CD4-positive, alpha-beta T cell (primary cell): ENCODE measurements at regions of chr19 and their contacts with region 1.

Region 1: GRCh38 chr19:58543826-58544590 is at the start of gene TRIM28:
- DNase-seq: peak; percentile 99 to 100 (median 100)
- ATAC-seq: peak; percentile 87
- H3K4me3 ChIP-seq: peak within 1 kb of the TSS; percentile 70
- H3K4me3 Mint-ChIP-seq: peak within 1 kb of the TSS; percentile 95
- H3K27ac ChIP-seq: peak within 1 kb of the TSS; percentile 79 to 88
- H3K27ac Mint-ChIP-seq: peak within 1 kb of the TSS; percentile 95
- H3K4me1 ChIP-seq: peaks cover 41% of the 10 kb centered on the region
- H3K4me1 Mint-ChIP-seq: peaks cover 40% of the 10 kb centered on the region
- H3K27me3 ChIP-seq: no peaks in the 10 kb centered on the region
- H3K27me3 Mint-ChIP-seq: no peaks in the 10 kb centered on the region
- CTCF ChIP-seq: no peak
- total RNA-seq, gene TRIM28: 549 to 553 TPM

Region 2: DNA sequence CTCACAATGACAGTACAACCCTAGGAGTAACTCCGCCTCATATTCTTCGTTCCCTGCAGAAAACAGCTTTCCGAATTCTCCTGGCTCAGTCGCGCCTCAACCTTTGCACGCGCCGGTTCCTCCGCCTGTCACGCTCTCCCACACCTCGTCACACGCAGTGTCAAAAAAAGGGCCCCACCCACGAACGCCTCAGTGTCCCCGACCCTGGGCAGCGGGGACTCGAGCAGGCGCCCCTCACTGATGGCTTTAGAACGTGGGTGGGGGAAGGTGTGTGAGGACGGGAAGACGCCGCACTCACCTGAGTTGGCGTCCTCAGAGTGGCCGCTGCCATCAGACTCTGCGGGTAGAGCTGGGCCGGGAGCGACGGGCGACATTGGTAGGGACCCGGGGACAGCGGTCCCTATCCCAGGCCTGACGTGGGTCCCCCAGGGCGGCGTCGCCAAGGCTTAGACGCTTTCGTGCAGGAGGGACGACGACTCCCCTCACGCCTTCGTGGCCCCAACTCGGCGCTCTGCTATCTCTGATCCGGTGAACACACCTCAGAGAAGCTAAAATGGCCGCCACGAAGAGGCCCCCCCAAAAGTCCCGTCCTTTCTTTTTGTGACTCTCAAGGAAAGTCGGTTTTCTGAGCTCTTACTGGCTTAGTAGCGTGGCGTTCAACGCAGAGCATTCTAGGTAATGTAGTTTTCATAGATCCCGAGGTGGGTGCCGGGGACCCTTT is 835.2 kb before region 1 on chr19 and contains the start of gene ZNF154:
- CTCF ChIA-PET with region 1: no interaction called
- POLR2A ChIA-PET with region 1: no interaction called
- intact Hi-C with region 1: no loop called
- DNase-seq: peak in 12 of 14 experiments; percentile 10 to 80 (median 34)
- ATAC-seq: peak; percentile 90
- H3K4me3 ChIP-seq: peak within 1 kb of the TSS; percentile 55
- H3K4me3 Mint-ChIP-seq: peak within 1 kb of the TSS; percentile 96
- H3K27ac ChIP-seq: peak within 1 kb of the TSS; percentile 47 to 52
- H3K27ac Mint-ChIP-seq: peak within 1 kb of the TSS; percentile 99
- H3K4me1 ChIP-seq: peaks cover 10% of the 10 kb centered on the region
- H3K4me1 Mint-ChIP-seq: peaks cover 44% of the 10 kb centered on the region
- H3K27me3 ChIP-seq: no peaks in the 10 kb centered on the region
- H3K27me3 Mint-ChIP-seq: no peaks in the 10 kb centered on the region
- CTCF ChIP-seq: no peak
- total RNA-seq, gene ZNF154: 16.9 to 18.0 TPM

Region 3: DNA sequence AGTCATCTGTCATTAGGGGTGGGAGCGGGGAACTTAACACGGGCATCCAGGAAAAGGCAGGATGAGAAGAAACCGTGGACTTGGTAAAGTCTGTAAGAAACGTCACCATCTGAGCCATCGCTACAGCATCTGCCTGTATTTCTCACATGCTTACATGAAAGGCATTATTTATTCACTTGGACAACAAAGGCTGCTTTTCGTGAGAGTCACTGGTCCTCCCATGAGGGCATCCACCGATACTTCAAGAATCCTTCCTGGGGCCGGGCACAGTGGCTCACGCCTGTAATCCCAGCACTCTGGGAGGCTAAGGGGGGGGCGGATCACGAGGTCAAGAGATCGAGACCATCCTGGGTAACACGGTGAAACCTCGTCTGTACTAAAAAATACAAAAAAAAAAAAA is 51.7 kb before region 1 on chr19:
- CTCF ChIA-PET with region 1: no interaction called
- POLR2A ChIA-PET with region 1: no interaction called
- intact Hi-C with region 1: no loop called
- DNase-seq: no peak
- ATAC-seq: no peak
- H3K4me3 ChIP-seq: no peak overlapping the region
- H3K4me3 Mint-ChIP-seq: no peak overlapping the region
- H3K27ac ChIP-seq: no peak overlapping the region
- H3K27ac Mint-ChIP-seq: no peak overlapping the region
- H3K4me1 ChIP-seq: no peaks in the 10 kb centered on the region
- H3K4me1 Mint-ChIP-seq: no peaks in the 10 kb centered on the region
- H3K27me3 ChIP-seq: no peaks in the 10 kb centered on the region
- H3K27me3 Mint-ChIP-seq: no peaks in the 10 kb centered on the region
- CTCF ChIP-seq: no peak

Region 4: DNA sequence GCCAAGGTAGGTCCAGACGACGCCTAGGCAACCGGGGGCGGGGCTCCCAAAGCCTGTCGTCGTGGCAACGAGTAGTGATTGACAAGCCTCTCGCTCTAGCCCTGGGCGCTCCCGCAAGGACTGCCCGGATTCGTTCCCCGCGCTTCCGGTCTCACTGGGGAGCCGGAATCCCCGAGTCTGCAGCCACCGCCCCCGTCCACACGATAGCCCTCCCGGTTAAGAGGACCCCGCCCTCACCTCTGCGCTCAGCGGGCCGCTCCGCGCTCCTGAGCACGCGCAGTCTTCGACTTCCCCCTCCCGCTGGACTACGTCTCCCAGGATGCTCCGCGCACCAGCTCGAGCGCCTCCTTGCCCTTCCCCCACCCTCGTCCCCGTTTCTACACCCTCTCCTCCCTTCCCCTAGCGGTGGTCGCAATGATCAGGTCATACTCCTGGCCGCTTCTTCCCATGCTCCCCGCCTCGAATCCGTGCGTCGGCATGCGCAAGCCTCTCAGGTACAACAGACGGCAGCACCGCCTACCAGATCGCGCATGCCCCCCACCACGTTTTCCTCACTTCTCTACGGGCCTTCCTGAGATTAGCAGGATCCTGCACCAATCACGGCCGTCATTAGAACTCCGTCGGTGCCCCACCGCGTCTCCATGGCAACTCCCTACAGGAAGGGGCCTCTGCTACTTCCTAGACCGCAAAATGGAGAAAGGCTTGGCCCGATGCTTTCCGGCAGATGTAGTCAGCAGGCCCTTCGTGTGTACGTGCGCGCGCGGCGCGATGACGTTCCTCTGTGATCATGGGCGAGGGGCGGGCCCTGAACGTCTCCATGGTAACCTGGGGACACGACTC is 29.0 kb after region 1 on chr19 and contains the start of gene MZF1:
- CTCF ChIA-PET with region 1: interaction called, 3 read pairs
- POLR2A ChIA-PET with region 1: interaction called, 14 read pairs
- intact Hi-C with region 1: loop called (anchors 1 kb)
- DNase-seq: peak; percentile 98 to 100 (median 100)
- ATAC-seq: peak; percentile 72
- H3K4me3 ChIP-seq: peak within 1 kb of the TSS; percentile 84
- H3K4me3 Mint-ChIP-seq: peak within 1 kb of the TSS; percentile 92
- H3K27ac ChIP-seq: peak within 1 kb of the TSS; percentile 100
- H3K27ac Mint-ChIP-seq: peak within 1 kb of the TSS; percentile 96
- H3K4me1 ChIP-seq: peaks cover 49% of the 10 kb centered on the region
- H3K4me1 Mint-ChIP-seq: peaks cover 36% of the 10 kb centered on the region
- H3K27me3 ChIP-seq: no peaks in the 10 kb centered on the region
- H3K27me3 Mint-ChIP-seq: no peaks in the 10 kb centered on the region
- CTCF ChIP-seq: no peak
- total RNA-seq, gene MZF1: 21.0 to 21.1 TPM